Caco-2 (cell line): ENCODE measurements at regions of chr15 and their contacts with region 1.

Region 1: GRCh38 chr15:20386198-20386597 is 155.4 kb downstream of the GOLGA6L6 start:
- DNase-seq: no peak
- H3K4me3 ChIP-seq: no peak overlapping the region
- H3K4me3 Mint-ChIP-seq: no peak overlapping the region
- H3K27ac Mint-ChIP-seq: no peak overlapping the region
- H3K4me1 ChIP-seq: no peaks in the 10 kb centered on the region
- H3K4me1 Mint-ChIP-seq: no peaks in the 10 kb centered on the region
- H3K27me3 ChIP-seq: no peaks in the 10 kb centered on the region
- H3K27me3 Mint-ChIP-seq: no peaks in the 10 kb centered on the region
- CTCF ChIP-seq: peak in 1 of 2 experiments; percentile 17

Region 2: DNA sequence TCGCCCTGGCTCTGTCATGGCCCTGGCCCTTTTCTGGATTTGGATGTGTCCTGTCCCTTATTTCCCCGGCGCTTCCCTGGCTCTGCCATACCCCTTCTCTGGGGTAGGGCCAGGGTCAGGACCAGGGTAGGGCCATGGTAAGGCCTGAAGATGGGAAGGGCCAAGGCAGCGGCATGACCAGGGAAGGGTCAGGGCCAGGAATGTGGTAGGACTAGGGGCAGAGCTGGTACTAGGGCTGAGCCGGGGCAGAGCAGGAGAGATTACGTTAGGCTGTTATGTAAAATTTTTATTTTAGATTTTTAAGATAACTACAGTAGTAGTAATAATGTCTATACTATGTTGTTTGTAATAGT is 81.2 kb before region 1 on chr15:
- CTCF ChIA-PET with region 1: no interaction called
- POLR2A ChIA-PET with region 1: no interaction called
- intact Hi-C with region 1: no loop called
- DNase-seq: no peak
- H3K4me3 ChIP-seq: no peak overlapping the region
- H3K4me3 Mint-ChIP-seq: no peak overlapping the region
- H3K27ac Mint-ChIP-seq: no peak overlapping the region
- H3K4me1 ChIP-seq: no peaks in the 10 kb centered on the region
- H3K4me1 Mint-ChIP-seq: no peaks in the 10 kb centered on the region
- H3K27me3 ChIP-seq: no peaks in the 10 kb centered on the region
- H3K27me3 Mint-ChIP-seq: no peaks in the 10 kb centered on the region
- CTCF ChIP-seq: no peak

Region 3: DNA sequence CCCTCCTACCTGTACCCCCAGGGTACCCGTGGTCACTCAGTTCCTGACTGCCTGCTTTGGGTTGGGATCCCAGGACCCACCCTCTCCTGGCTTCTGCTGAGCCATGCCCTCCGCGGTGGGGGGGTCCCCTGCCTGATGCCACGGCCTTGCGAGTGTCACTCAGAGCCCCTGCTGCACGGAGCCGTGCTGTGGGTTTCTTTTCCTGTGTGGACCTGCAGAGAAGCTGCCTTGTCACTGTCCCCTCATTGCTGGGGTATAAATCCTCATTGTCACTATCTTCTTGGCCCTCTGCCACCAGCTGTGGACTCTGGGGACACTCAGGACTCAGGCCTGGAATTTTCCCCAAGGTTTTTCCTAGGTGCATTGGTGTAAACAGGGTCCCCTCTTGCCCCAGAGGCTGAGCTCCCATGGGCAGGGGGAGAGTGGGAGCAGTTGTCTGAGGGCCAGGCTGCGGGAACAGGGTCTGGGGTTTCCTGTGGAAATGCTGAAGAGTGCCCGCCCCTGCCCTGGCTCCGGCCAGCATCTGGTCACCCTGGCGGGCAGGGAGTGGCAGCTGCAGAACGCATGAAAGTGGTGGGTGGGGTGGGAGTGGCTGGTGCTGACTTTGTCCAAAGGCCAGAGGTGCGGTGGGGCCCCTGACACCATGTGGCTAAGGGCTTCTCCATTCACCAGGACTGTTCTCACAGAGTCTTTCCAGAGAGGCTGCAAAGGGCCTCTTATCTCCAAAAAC is 36.3 kb before region 1 on chr15:
- CTCF ChIA-PET with region 1: no interaction called
- POLR2A ChIA-PET with region 1: no interaction called
- intact Hi-C with region 1: loop called (anchors 5 kb)
- DNase-seq: peak in 1 of 2 experiments; percentile 80
- H3K4me3 ChIP-seq: no peak overlapping the region
- H3K4me3 Mint-ChIP-seq: no peak overlapping the region
- H3K27ac Mint-ChIP-seq: no peak overlapping the region
- H3K4me1 ChIP-seq: no peaks in the 10 kb centered on the region
- H3K4me1 Mint-ChIP-seq: no peaks in the 10 kb centered on the region
- H3K27me3 ChIP-seq: no peaks in the 10 kb centered on the region
- H3K27me3 Mint-ChIP-seq: no peaks in the 10 kb centered on the region
- CTCF ChIP-seq: no peak

Region 4: DNA sequence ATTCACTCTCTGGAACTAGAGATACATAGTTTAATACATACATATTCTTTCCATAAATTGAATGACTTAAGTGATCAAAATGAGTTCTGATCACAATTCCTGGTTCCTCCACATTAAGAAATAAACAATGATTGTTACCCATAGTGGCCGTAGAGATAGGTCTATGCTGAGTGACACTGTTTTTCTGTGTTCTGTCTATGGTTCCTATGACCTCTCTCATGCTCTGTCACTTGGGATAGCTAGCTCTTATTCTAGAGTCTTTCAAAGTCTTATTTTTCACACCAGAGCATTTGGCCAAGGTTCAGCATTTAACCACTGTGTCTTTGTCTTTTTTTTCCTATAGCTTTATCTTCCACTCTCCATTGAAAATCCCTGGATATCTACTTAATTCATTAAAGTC is 23.0 kb after region 1 on chr15:
- CTCF ChIA-PET with region 1: no interaction called
- POLR2A ChIA-PET with region 1: no interaction called
- intact Hi-C with region 1: no loop called
- DNase-seq: no peak
- H3K4me3 ChIP-seq: no peak overlapping the region
- H3K4me3 Mint-ChIP-seq: no peak overlapping the region
- H3K27ac Mint-ChIP-seq: no peak overlapping the region
- H3K4me1 ChIP-seq: no peaks in the 10 kb centered on the region
- H3K4me1 Mint-ChIP-seq: no peaks in the 10 kb centered on the region
- H3K27me3 ChIP-seq: no peaks in the 10 kb centered on the region
- H3K27me3 Mint-ChIP-seq: no peaks in the 10 kb centered on the region
- CTCF ChIP-seq: no peak